Activated CD8-positive, alpha-beta T cell treated with anti-CD3 and anti-CD28 coated beads, Interleukin-2, amount 10 ng/mL, durations not matched to agents 7 days and 5 days (primary cell): ENCODE measurements at regions of chr11 and their contacts with region 1.

Region 1: GRCh38 chr11:128157423-128158298 is 429.7 kb downstream of the ETS1 start:
- DNase-seq: peak; percentile 79
- ATAC-seq: peak; percentile 93
- H3K4me3 Mint-ChIP-seq: peak overlapping the region; percentile 68
- H3K27ac Mint-ChIP-seq: peak overlapping the region; percentile 83
- H3K4me1 Mint-ChIP-seq: peaks cover 13% of the 10 kb centered on the region
- H3K27me3 Mint-ChIP-seq: peaks cover 12% of the 10 kb centered on the region

Region 2: GRCh38 chr11:128021349-128022006 is 136.2 kb before region 1 on chr11:
- CTCF ChIA-PET with region 1: interaction called, 80 read pairs
- POLR2A ChIA-PET with region 1: no interaction called
- DNase-seq: no peak
- ATAC-seq: no peak
- H3K4me3 Mint-ChIP-seq: no peak overlapping the region
- H3K27ac Mint-ChIP-seq: no peak overlapping the region
- H3K4me1 Mint-ChIP-seq: no peaks in the 10 kb centered on the region
- H3K27me3 Mint-ChIP-seq: peaks cover 27% of the 10 kb centered on the region

Region 3: GRCh38 chr11:128103278-128103873 is 54.3 kb before region 1 on chr11:
- CTCF ChIA-PET with region 1: interaction called, 11 read pairs
- POLR2A ChIA-PET with region 1: no interaction called
- DNase-seq: no peak
- ATAC-seq: no peak
- H3K4me3 Mint-ChIP-seq: no peak overlapping the region
- H3K27ac Mint-ChIP-seq: no peak overlapping the region
- H3K4me1 Mint-ChIP-seq: peaks cover 5% of the 10 kb centered on the region
- H3K27me3 Mint-ChIP-seq: peaks cover 4% of the 10 kb centered on the region

Region 4: DNA sequence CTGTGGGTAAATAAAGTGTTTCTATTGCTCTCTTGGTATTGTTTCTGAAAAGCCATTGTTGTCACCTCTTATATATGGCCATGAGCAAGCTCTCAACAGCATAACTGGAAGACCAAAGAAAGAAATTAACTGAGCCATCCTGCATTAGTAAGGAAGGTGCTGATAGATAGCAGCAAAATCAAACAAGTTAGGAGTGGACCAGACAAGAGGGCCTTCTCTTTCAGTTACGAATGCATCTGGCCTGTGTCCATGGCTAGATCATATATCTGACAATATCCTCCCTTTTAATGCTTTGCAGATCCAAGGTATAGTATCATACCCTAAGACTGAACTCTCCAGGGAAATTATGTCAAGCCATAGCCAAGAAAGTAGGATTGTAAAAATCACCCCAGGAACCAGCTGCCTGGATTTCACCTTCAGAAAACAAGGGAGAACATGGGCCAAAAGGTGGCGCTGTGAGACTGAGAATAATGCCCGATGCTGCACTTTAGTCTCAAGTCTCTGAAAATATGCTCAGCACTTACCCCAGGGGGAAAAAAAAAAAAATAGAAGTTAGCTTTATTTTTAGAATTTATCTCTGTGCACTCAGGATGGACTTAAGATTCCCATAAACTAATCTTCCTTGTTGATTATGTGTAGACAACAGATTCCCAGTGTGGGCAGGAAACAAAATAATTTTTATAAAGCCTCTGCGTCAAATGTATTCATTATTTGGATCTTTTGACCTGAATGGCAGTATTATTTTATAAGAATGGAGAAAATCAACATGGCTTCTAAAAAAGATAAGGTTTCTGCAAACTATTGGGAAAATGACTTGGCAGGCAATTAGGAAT is 14.6 kb after region 1 on chr11:
- CTCF ChIA-PET with region 1: interaction called, 176 read pairs
- POLR2A ChIA-PET with region 1: no interaction called
- DNase-seq: peak; percentile 91
- ATAC-seq: peak; percentile 86
- H3K4me3 Mint-ChIP-seq: no peak overlapping the region
- H3K27ac Mint-ChIP-seq: no peak overlapping the region
- H3K4me1 Mint-ChIP-seq: no peaks in the 10 kb centered on the region
- H3K27me3 Mint-ChIP-seq: peaks cover 11% of the 10 kb centered on the region

Region 5: GRCh38 chr11:128208329-128209137 is 50.9 kb after region 1 on chr11:
- CTCF ChIA-PET with region 1: interaction called, 10 read pairs
- POLR2A ChIA-PET with region 1: no interaction called
- DNase-seq: no peak
- ATAC-seq: peak; percentile 36
- H3K4me3 Mint-ChIP-seq: no peak overlapping the region
- H3K27ac Mint-ChIP-seq: no peak overlapping the region
- H3K4me1 Mint-ChIP-seq: peaks cover 10% of the 10 kb centered on the region
- H3K27me3 Mint-ChIP-seq: peaks cover 2% of the 10 kb centered on the region

Region 6: GRCh38 chr11:128334311-128335044 is 176.8 kb after region 1 on chr11:
- CTCF ChIA-PET with region 1: no interaction called
- POLR2A ChIA-PET with region 1: no interaction called
- DNase-seq: no peak
- ATAC-seq: no peak
- H3K4me3 Mint-ChIP-seq: no peak overlapping the region
- H3K27ac Mint-ChIP-seq: no peak overlapping the region
- H3K4me1 Mint-ChIP-seq: peaks cover 49% of the 10 kb centered on the region
- H3K27me3 Mint-ChIP-seq: no peaks in the 10 kb centered on the region

Region 7: DNA sequence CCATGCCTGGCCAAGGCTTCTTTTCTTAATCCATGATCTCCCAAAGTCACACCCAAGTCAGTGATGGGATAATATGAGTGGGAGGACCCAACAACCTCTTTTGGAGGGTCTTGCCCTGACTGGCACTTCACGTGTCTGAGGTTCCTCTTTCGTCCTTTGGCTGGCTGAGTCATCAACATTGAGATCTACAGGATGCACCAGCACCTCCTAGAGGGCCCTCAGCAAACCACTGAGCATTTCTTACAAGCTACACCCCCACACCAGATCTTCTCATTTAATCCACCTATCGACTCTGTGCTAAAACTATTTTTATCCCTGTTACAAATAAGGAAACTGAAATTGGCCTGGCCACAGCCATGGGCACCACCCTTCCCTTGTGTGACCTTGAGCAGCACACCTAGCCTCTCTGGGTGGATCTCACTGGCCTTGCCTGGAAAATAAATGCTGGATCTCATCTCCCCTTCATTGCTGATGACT is 599.6 kb after region 1 on chr11:
- CTCF ChIA-PET with region 1: interaction called, 10 read pairs
- POLR2A ChIA-PET with region 1: no interaction called
- DNase-seq: peak; percentile 84
- ATAC-seq: peak; percentile 91
- H3K4me3 Mint-ChIP-seq: no peak overlapping the region
- H3K27ac Mint-ChIP-seq: peak overlapping the region; percentile 87
- H3K4me1 Mint-ChIP-seq: peaks cover 76% of the 10 kb centered on the region
- H3K27me3 Mint-ChIP-seq: no peaks in the 10 kb centered on the region